ENCODE measurements at regions of chr12 and their contacts with region 1.

Region 1: GRCh38 chr12:6195665-6196535 is 4.3 kb upstream of the CD9 start:
- DNase-seq: peak; percentile 72
- ATAC-seq: peak; percentile 87
- H3K4me3 ChIP-seq: no peak overlapping the region
- H3K27ac ChIP-seq: peak overlapping the region; percentile 46
- H3K4me1 ChIP-seq: peaks cover 17 to 39% of the 10 kb centered on the region in 2 experiments
- H3K27me3 ChIP-seq: no peaks in the 10 kb centered on the region
- CTCF ChIP-seq: peak; percentile 88 to 93 (median 89)
- POLR2A ChIP-seq: no peak
- RAD21 ChIP-seq: peak; percentile 97

Region 2: GRCh38 chr12:6062757-6063735 is 132.9 kb before region 1 on chr12:
- CTCF ChIA-PET with region 1: interaction called, 22 read pairs
- POLR2A ChIA-PET with region 1: no interaction called
- RAD21 ChIA-PET with region 1: interaction called, 3 to 4 read pairs
- intact Hi-C with region 1: loop called (anchors 1 kb)
- DNase-seq: no peak
- ATAC-seq: peak; percentile 85
- H3K4me3 ChIP-seq: no peak overlapping the region
- H3K27ac ChIP-seq: no peak overlapping the region
- H3K4me1 ChIP-seq: peaks cover 0 to 21% of the 10 kb centered on the region in 2 experiments; a peak in 3 of 4 replicates
- H3K27me3 ChIP-seq: no peaks in the 10 kb centered on the region
- CTCF ChIP-seq: peak; percentile 90 to 98 (median 97)
- POLR2A ChIP-seq: no peak
- RAD21 ChIP-seq: peak; percentile 98

Region 3: DNA sequence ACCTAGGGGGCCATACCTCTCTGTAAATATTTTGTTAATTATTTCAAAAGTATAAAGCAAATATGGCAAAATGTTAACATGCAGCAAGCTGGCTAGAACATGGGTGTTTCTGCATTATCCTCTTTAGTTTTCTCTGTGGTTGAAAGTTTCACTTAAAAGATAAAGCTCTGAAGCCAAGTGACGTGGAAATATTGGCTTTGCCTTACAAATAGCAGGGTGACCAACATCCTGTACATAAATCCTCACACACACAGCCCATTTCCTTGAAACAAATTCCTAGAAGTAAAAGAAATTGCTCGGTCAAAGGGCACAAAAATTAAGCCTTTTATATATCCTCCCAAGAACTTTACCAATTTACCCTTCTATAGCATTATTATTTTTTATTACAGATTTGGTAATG is 60.8 kb before region 1 on chr12:
- CTCF ChIA-PET with region 1: no interaction called
- POLR2A ChIA-PET with region 1: no interaction called
- RAD21 ChIA-PET with region 1: no interaction called
- intact Hi-C with region 1: no loop called
- DNase-seq: no peak
- ATAC-seq: no peak
- H3K4me3 ChIP-seq: no peak overlapping the region
- H3K27ac ChIP-seq: no peak overlapping the region
- H3K4me1 ChIP-seq: no peaks in the 10 kb centered on the region
- H3K27me3 ChIP-seq: no peaks in the 10 kb centered on the region
- CTCF ChIP-seq: no peak
- POLR2A ChIP-seq: no peak
- RAD21 ChIP-seq: no peak

Region 4: GRCh38 chr12:6207259-6207925 is 11.5 kb after region 1 on chr12:
- CTCF ChIA-PET with region 1: interaction called, 10 read pairs
- POLR2A ChIA-PET with region 1: no interaction called
- RAD21 ChIA-PET with region 1: no interaction called
- intact Hi-C with region 1: no loop called
- DNase-seq: no peak
- ATAC-seq: no peak
- H3K4me3 ChIP-seq: no peak overlapping the region
- H3K27ac ChIP-seq: no peak overlapping the region
- H3K4me1 ChIP-seq: peaks cover 32 to 60% of the 10 kb centered on the region in 2 experiments
- H3K27me3 ChIP-seq: no peaks in the 10 kb centered on the region
- CTCF ChIP-seq: no peak
- POLR2A ChIP-seq: no peak
- RAD21 ChIP-seq: no peak

Region 5: DNA sequence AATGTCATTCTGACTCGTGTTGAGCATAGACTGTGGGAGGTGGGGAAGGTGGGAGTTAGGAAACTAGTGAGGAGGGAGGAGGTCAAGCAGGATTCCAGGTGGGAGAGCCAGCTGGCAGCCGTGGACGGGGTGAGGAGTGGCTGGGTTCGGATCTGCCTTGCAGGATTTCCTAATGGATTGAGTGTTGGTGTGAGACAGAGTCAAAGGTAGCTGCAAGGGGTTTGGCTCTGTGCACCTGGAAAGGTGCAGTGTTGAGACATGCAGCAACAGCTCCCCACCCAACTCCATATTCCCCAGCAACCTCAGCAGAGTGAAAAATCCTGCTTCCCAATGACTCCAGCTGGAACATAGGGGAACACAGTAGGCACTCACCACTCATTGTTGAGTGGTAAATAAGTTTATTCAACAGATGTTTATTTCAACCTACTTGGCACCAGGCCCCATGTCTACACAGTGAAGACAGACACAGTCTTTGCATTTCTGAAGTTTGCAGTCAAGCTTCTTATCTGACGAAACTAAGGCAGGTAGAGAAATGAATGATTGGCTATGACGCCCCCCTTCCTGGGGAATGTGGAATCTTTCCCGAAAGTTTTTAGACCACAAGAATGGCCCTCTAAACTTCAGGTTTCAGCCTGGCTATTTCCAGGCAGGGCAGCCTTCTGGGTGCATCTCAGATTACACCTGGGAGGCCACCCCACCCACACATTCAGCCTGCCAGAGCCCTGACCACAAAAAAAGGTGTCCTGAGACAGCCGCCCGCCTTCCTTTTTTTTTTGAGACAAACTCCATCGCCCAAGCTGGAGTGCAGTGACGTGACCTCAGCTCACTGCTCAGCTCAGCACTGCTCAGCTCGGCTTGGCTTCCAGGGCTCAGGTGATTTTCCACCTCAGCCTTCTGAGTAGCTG is 76.7 kb after region 1 on chr12:
- CTCF ChIA-PET with region 1: interaction called, 106 read pairs
- POLR2A ChIA-PET with region 1: interaction called, 12 read pairs
- RAD21 ChIA-PET with region 1: interaction called, 5 read pairs
- intact Hi-C with region 1: no loop called
- DNase-seq: peak; percentile 88
- ATAC-seq: peak; percentile 85
- H3K4me3 ChIP-seq: peak overlapping the region; percentile 7 to 38
- H3K27ac ChIP-seq: peak overlapping the region; percentile 84
- H3K4me1 ChIP-seq: peaks cover 46 to 48% of the 10 kb centered on the region in 2 experiments
- H3K27me3 ChIP-seq: no peaks in the 10 kb centered on the region; the same call in 1 of the 2 replicates
- CTCF ChIP-seq: no peak
- POLR2A ChIP-seq: no peak
- RAD21 ChIP-seq: no peak

Region 6: DNA sequence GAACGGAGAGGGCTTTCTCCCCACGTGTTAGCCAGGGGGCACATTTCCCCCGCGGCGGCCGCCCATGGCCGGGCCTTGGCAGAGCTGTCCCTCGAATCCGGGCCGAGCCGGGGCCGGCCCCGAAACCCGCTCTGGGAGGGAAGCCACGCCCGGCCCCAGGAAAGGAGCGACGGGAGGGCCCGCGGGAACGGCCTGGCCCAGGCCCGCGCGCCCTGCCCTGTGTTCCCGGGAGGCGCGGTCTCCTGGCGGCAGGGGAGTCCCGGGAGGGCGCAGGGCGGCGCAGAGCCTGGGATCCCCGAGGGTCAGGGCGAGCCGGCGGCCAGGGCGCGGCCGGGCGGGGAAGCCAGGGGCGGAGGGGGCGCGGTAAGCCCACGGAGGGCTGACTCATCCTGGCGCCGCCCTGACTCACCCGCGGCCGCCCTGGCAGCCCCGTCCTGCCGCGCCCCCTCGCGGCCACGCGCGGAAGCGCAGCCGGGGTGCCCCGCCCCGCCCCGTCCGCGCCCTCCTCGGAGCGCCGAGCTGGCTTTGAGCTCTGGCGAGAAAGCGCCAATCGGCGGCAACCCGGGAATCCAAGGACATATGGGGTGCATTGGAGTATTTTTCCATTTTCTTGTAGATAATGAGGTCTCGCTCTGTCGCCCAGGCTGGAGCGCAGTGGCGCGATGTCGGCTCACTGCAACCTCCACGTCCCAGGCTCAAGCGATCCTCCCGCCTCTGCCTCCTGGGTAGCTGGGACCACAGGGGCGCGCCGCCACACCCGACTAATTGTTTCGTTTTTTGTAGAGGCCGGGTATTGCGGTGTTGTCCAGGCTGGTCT is 82.7 kb after region 1 on chr12:
- CTCF ChIA-PET with region 1: interaction called, 106 read pairs
- POLR2A ChIA-PET with region 1: interaction called, 12 read pairs
- RAD21 ChIA-PET with region 1: interaction called, 15 to 22 read pairs
- intact Hi-C with region 1: loop called (anchors 1 kb)
- DNase-seq: no peak
- ATAC-seq: peak; percentile 65
- H3K4me3 ChIP-seq: peak overlapping the region; percentile 37 to 56
- H3K27ac ChIP-seq: peak overlapping the region; percentile 94
- H3K4me1 ChIP-seq: peaks cover 64 to 78% of the 10 kb centered on the region in 2 experiments
- H3K27me3 ChIP-seq: no peaks in the 10 kb centered on the region; the same call in 1 of the 2 replicates
- CTCF ChIP-seq: peak in 2 of 3 experiments; percentile 55 to 75; a peak in 4 of 6 replicates
- POLR2A ChIP-seq: peak; percentile 12
- RAD21 ChIP-seq: no peak

Region 7: DNA sequence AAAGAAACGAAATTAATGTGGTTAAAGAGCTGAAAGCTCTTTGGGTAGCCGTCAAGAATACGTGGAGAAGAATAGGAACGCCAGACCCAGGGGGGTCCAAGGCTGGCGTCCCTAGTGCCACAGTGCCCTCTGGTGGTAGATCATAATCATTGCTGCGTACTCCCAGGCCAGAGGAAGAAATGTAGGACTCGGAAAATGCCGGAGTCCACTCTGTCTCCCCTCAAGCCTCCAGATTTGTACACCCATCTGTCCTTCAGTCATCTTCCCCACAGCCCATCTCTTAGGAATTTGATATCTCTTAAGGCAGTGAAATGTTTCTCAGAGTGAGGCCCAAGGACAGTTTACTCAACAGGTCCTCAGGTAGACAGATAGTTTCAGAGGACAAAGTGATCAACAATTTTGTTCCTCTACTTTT is 89.2 kb after region 1 on chr12:
- CTCF ChIA-PET with region 1: interaction called, 106 read pairs
- POLR2A ChIA-PET with region 1: interaction called, 12 read pairs
- RAD21 ChIA-PET with region 1: interaction called, 15 to 22 read pairs
- intact Hi-C with region 1: loop called (anchors 1 kb)
- DNase-seq: no peak
- ATAC-seq: peak; percentile 64
- H3K4me3 ChIP-seq: no peak overlapping the region
- H3K27ac ChIP-seq: no peak overlapping the region
- H3K4me1 ChIP-seq: peaks cover 29 to 66% of the 10 kb centered on the region in 2 experiments
- H3K27me3 ChIP-seq: no peaks in the 10 kb centered on the region
- CTCF ChIP-seq: peak in 2 of 3 experiments; percentile 76 to 88; a peak in 4 of 6 replicates
- POLR2A ChIP-seq: no peak
- RAD21 ChIP-seq: no peak

Region 8: GRCh38 chr12:6295094-6295811 is 99.4 kb after region 1 on chr12:
- CTCF ChIA-PET with region 1: no interaction called
- POLR2A ChIA-PET with region 1: no interaction called
- RAD21 ChIA-PET with region 1: no interaction called
- intact Hi-C with region 1: no loop called
- DNase-seq: peak; percentile 69
- ATAC-seq: peak; percentile 81
- H3K4me3 ChIP-seq: no peak overlapping the region
- H3K27ac ChIP-seq: no peak overlapping the region
- H3K4me1 ChIP-seq: peaks cover 12 to 38% of the 10 kb centered on the region in 2 experiments
- H3K27me3 ChIP-seq: no peaks in the 10 kb centered on the region
- CTCF ChIP-seq: no peak
- POLR2A ChIP-seq: no peak
- RAD21 ChIP-seq: no peak

Region 9: GRCh38 chr12:6443361-6443983 is 247.6 kb after region 1 on chr12:
- CTCF ChIA-PET with region 1: no interaction called
- POLR2A ChIA-PET with region 1: no interaction called
- RAD21 ChIA-PET with region 1: no interaction called
- intact Hi-C with region 1: no loop called
- DNase-seq: no peak
- ATAC-seq: no peak
- H3K4me3 ChIP-seq: no peak overlapping the region
- H3K27ac ChIP-seq: no peak overlapping the region
- H3K4me1 ChIP-seq: no peaks in the 10 kb centered on the region
- H3K27me3 ChIP-seq: no peaks in the 10 kb centered on the region
- CTCF ChIP-seq: no peak
- POLR2A ChIP-seq: no peak
- RAD21 ChIP-seq: no peak